Heart right ventricle (tissue), 16 donors: ENCODE measurements at regions of chr16 and their contacts with region 1.

Region 1: DNA sequence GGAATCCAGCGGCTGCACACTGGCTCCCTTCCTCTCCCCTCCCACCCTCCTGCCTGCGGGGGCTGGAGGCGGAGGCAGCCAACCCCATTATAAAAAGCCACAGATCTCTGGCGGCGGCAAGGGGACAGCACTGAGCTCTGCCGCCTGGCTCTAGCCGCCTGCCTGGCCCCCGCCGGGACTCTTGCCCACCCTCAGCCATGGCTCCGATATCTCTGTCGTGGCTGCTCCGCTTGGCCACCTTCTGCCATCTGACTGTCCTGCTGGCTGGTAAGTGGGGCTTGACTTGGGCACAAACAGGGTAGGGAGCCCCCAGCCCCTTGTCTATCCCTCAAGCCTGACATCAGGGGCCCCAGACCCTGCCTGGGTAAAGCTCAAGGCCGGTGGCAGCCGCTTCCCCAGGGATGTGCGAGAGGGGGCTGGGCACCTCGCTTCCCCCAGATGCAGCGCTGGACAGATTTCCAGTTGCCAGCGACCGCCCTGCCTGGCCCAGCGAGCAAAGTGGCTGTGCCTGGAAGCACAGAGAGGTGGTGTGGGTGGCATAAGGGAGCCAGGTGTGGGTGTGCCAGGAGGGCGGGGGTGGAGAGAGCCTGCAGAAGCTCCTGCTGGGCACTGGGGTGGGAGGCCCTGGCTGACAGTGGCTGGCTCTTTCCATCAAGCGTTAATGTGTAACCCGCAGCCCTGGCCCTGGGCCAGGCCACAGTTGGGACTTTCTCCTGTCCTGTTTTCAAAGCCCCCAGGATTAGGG is at the start of gene CX3CL1:
- DNase-seq: peak; percentile 64 to 83
- ATAC-seq: peak; percentile 70 to 95 (median 89)
- H3K4me3 ChIP-seq: peak within 1 kb of the TSS; percentile 42 to 83 (median 70)
- H3K27ac ChIP-seq: peak within 1 kb of the TSS; percentile 72 to 97 (median 94)
- H3K4me1 ChIP-seq: peaks cover 0 to 59% (median 25%) of the 10 kb centered on the region in 9 donors
- H3K27me3 ChIP-seq: no peaks in the 10 kb centered on the region
- CTCF ChIP-seq: peak in 7 of 9 donors; percentile 24 to 64 (median 39)
- total RNA-seq, gene CX3CL1: 7.8 to 46.3 (median 14.5) TPM

Region 2: DNA sequence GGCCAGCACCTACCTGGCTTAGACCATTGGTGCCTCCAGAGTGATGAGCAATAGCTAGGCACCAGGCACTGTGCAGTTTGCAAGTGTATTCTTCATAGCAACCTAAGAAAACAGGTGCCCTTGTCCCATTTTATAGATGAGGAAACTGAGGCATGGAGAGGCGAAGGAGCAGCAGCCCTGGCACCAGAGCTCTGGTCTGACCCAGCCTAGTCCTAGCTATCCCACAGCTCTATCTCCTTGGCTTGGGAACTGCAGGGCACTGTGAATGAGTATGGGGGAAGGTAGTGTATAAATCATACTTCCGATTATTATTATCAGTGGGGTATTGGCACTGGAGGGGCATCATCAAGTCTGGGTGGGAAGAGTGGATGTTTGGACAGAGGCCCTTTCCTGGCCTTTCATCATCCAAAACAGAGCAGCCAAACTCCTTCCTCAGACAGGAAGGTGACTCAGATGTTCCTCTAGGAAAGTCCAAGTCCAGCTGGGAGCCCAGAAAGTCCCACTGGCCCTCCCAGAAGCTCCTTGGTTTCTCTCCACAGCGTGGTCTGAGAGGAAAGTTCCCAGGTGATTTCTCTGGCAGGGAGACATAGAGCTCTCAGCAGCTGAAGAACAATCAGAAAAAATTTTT is 56.0 kb before region 1 on chr16:
- intact Hi-C with region 1: loop called in 1 of 10 experiments (anchors 5 kb)
- DNase-seq: peak in 1 of 2 donors; percentile 79
- ATAC-seq: peak; percentile 78 to 92 (median 86)
- H3K4me3 ChIP-seq: no peak overlapping the region
- H3K27ac ChIP-seq: peak overlapping the region in 9 of 10 donors; percentile 62 to 87 (median 80)
- H3K4me1 ChIP-seq: peaks cover 0 to 56% (median 36%) of the 10 kb centered on the region in 9 donors
- H3K27me3 ChIP-seq: no peaks in the 10 kb centered on the region
- CTCF ChIP-seq: no peak

Region 3: GRCh38 chr16:57335366-57335765 is 37.2 kb before region 1 on chr16:
- intact Hi-C with region 1: loop called in 2 of 10 experiments (anchors 2 to 5 kb)
- DNase-seq: no peak
- ATAC-seq: peak in 6 of 8 donors; percentile 52 to 92 (median 74)
- H3K4me3 ChIP-seq: no peak overlapping the region
- H3K27ac ChIP-seq: peak overlapping the region in 4 of 10 donors; percentile 7 to 78 (median 68)
- H3K4me1 ChIP-seq: peaks cover 0 to 10% (median 0%) of the 10 kb centered on the region in 9 donors
- H3K27me3 ChIP-seq: no peaks in the 10 kb centered on the region
- CTCF ChIP-seq: no peak

Region 4: DNA sequence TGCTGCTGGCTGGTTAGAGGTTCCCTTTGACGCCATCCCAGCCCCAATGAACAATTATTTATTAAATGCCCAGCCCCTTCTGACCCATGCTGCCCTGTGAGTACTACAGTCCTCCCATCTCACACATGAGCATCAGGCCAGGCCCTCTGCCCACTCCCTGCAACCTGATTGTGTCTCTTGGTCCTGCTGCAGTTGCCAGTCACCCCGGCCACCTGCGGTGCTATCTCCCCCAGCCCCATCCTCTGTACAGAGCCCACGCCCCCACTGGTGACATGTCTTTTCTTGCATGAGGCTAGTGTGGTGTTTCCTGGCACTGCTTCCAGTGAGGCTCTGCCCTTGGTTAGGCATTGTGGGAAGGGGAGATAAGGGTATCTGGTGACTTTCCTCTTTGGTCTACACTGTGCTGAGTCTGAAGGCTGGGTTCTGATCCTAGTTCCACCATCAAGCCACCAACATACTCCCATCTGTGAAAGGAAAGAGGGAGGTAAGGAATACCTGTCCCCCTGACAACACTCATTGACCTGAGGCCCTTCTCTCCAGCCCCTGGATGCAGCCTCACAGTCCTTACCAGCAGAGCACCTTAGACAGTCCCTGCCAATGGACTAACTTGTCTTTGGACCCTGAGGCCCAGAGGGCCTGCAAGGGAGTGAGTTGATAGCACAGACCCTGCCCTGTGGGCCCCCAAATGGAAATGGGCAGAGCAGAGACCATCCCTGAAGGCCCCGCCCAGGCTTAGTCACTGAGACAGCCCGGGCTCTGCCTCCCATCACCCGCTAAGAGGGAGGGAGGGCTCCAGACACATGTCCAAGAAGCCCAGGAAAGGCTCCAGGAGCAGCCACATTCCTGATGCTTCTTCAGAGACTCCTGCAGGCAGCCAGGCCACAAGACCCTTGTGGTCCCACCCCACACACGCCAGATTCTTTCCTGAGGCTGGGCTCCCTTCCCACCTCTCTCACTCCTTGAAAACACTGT is 11.0 kb after region 1 on chr16:
- intact Hi-C with region 1: no loop called
- DNase-seq: no peak
- ATAC-seq: peak in 5 of 8 donors; percentile 26 to 45 (median 39)
- H3K4me3 ChIP-seq: no peak overlapping the region
- H3K27ac ChIP-seq: peak overlapping the region in 5 of 10 donors; percentile 31 to 65 (median 55)
- H3K4me1 ChIP-seq: peaks cover 10 to 87% (median 59%) of the 10 kb centered on the region in 9 donors
- H3K27me3 ChIP-seq: no peaks in the 10 kb centered on the region
- CTCF ChIP-seq: no peak